ENCODE measurements at regions of chr2 and their contacts with region 1.

Region 1: GRCh38 chr2:73085691-73086360 is 14.3 kb upstream of the SFXN5 start:
- DNase-seq: peak; percentile 89
- H3K4me3 Mint-ChIP-seq: no peak overlapping the region
- H3K27ac Mint-ChIP-seq: no peak overlapping the region
- H3K4me1 Mint-ChIP-seq: no peaks in the 10 kb centered on the region
- H3K27me3 Mint-ChIP-seq: no peaks in the 10 kb centered on the region

Region 2: DNA sequence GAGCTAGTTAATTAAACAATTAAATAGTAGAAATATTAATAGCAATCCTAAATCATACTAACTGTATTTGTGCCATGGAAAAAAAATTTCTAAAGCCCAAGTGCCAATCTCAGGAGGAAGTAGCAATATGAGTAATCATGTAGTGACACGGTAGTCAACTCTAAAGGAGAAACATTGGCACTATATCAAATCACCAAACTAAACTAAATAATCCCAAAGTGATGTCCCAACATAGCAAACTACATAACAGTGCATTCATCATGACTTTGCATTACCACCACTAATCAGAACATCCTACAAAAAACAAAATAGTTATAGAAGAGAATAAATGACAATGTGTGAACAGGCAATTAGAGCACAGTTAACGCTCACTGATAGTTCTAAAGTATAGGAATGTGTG is 455.1 kb before region 1 on chr2:
- CTCF ChIA-PET with region 1: no interaction called
- DNase-seq: no peak
- H3K4me3 Mint-ChIP-seq: no peak overlapping the region
- H3K27ac Mint-ChIP-seq: no peak overlapping the region
- H3K4me1 Mint-ChIP-seq: no peaks in the 10 kb centered on the region
- H3K27me3 Mint-ChIP-seq: no peaks in the 10 kb centered on the region

Region 3: DNA sequence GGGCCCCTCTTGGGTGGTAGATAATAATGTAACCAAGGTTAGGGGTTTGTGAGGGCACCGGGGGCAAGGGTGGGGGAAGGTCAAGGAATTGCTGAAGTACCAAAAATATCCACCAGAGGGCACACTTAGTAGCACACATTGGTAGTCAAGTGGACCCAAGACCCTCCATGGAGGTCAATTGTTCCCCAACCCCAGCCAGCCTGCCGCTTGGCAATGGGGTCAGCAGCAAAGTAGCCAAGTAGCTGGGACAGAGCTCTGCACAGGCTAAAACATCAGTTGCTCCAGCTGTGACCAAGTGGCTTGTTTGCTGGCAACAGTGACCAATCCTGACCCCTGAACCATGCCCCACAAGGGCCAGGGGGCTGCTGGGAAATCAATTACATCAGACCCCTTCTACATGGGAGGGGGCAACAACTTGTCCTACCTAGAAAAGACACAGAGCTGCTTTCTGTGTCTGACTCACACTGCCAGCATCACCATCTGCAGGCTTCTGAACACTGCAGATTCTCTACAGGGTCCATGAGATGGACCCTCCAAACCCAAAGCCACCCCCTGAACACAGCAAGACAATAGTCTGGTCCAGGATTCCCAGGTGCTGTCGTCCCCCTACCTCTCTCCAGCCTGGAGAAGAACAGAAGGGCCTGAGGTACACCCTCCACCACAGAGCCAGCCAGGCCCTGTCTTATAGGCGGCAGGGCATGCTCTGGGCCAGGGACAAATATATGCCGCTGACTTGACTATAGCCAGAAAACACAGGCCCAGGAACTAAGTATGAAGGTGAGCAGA is 92.5 kb before region 1 on chr2:
- CTCF ChIA-PET with region 1: interaction called, 10 read pairs
- DNase-seq: peak; percentile 57
- H3K4me3 Mint-ChIP-seq: no peak overlapping the region
- H3K27ac Mint-ChIP-seq: no peak overlapping the region
- H3K4me1 Mint-ChIP-seq: no peaks in the 10 kb centered on the region
- H3K27me3 Mint-ChIP-seq: no peaks in the 10 kb centered on the region

Region 4: GRCh38 chr2:73063909-73064875 is 21.6 kb before region 1 on chr2:
- CTCF ChIA-PET with region 1: no interaction called
- DNase-seq: no peak
- H3K4me3 Mint-ChIP-seq: no peak overlapping the region
- H3K27ac Mint-ChIP-seq: no peak overlapping the region
- H3K4me1 Mint-ChIP-seq: peaks cover 15% of the 10 kb centered on the region
- H3K27me3 Mint-ChIP-seq: peaks cover 8% of the 10 kb centered on the region

Region 5: GRCh38 chr2:73095910-73096309 is 10.1 kb after region 1 on chr2:
- CTCF ChIA-PET with region 1: interaction called, 14 read pairs
- DNase-seq: no peak
- H3K4me3 Mint-ChIP-seq: no peak overlapping the region
- H3K27ac Mint-ChIP-seq: no peak overlapping the region
- H3K4me1 Mint-ChIP-seq: no peaks in the 10 kb centered on the region
- H3K27me3 Mint-ChIP-seq: no peaks in the 10 kb centered on the region

Region 6: DNA sequence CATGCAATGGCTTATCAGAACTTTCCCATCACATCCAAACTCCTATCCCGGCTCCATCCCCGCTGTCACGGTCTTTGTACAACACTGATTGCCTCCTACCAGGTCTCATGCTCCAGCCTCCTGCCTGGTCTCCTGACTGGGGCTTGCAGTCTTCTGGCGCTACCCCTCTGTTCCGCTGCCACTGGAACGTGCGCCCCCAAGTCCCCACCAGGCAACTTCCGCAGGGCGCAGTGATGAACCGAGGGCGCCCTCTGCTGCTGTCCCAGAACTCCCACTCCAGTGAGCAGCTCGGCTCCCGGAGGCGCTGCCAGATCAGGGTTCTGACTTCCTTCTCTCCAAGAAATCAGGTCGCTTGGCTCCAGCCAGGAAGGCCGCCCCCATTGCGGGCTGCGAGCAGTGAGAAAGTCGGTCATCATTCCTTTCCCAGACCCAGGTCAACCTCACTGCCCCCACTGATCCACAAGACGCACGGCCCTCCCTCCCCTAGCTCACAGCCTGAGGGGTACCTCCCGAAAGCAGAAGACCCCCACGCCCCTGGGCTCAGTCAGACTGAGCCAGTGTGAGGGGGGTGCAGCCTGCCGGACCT is 70.8 kb after region 1 on chr2:
- CTCF ChIA-PET with region 1: interaction called, 52 read pairs
- DNase-seq: peak; percentile 63
- H3K4me3 Mint-ChIP-seq: no peak overlapping the region
- H3K27ac Mint-ChIP-seq: no peak overlapping the region
- H3K4me1 Mint-ChIP-seq: no peaks in the 10 kb centered on the region
- H3K27me3 Mint-ChIP-seq: peaks cover 46% of the 10 kb centered on the region

Region 7: GRCh38 chr2:73163483-73164367 is 77.9 kb after region 1 on chr2:
- CTCF ChIA-PET with region 1: interaction called, 14 read pairs
- DNase-seq: peak; percentile 72
- H3K4me3 Mint-ChIP-seq: no peak overlapping the region
- H3K27ac Mint-ChIP-seq: no peak overlapping the region
- H3K4me1 Mint-ChIP-seq: no peaks in the 10 kb centered on the region
- H3K27me3 Mint-ChIP-seq: peaks cover 14% of the 10 kb centered on the region

Region 8: DNA sequence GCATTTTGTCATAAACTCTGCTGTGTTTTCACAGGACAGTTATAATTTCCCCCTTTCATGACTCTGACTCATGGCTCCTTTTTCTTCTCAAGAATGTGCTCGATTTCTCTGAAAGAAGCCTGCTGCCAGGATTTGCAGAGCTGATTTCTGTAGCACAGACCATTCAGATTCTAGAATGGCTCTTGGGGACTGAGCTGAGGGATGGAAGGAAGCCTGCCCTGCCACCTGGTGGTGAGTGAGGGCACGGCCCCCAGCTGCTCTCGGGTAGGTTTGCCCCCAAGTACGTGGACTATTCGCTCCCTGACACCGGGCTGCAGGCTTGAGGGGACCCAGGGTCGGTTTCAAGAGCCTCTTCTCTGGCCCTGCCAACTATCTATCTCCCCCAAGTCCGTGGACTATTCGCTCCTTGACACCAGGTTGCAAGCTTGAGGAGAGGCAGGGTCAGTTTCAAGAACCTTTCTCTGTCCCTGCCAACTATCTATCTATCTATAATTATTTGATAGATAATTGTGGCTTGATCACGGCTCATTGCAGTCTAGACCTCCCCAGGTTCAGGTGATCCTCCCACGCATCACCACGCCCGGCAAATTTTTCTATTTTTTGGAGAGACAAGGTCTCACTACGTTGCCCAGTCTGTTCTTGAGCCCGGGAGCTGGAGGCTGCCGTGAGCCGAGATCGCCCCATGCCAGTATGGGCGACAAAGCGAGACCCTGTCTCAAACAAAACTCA is 126.8 kb after region 1 on chr2:
- CTCF ChIA-PET with region 1: interaction called, 12 read pairs
- DNase-seq: peak; percentile 79
- H3K4me3 Mint-ChIP-seq: no peak overlapping the region
- H3K27ac Mint-ChIP-seq: no peak overlapping the region
- H3K4me1 Mint-ChIP-seq: peaks cover 32% of the 10 kb centered on the region
- H3K27me3 Mint-ChIP-seq: peaks cover 20% of the 10 kb centered on the region